Caco-2 (cell line): ENCODE measurements at regions of chr11 and their contacts with region 1.

Region 1: GRCh38 chr11:3849297-3849874 is 6.1 kb upstream of the STIM1 start:
- DNase-seq: peak in 1 of 2 experiments; percentile 70
- H3K4me3 ChIP-seq: no peak overlapping the region
- H3K4me3 Mint-ChIP-seq: no peak overlapping the region
- H3K27ac Mint-ChIP-seq: no peak overlapping the region
- H3K4me1 ChIP-seq: peaks cover 7% of the 10 kb centered on the region
- H3K4me1 Mint-ChIP-seq: peaks cover 19% of the 10 kb centered on the region
- H3K27me3 ChIP-seq: no peaks in the 10 kb centered on the region
- H3K27me3 Mint-ChIP-seq: no peaks in the 10 kb centered on the region
- CTCF ChIP-seq: peak; percentile 67 to 74

Region 2: DNA sequence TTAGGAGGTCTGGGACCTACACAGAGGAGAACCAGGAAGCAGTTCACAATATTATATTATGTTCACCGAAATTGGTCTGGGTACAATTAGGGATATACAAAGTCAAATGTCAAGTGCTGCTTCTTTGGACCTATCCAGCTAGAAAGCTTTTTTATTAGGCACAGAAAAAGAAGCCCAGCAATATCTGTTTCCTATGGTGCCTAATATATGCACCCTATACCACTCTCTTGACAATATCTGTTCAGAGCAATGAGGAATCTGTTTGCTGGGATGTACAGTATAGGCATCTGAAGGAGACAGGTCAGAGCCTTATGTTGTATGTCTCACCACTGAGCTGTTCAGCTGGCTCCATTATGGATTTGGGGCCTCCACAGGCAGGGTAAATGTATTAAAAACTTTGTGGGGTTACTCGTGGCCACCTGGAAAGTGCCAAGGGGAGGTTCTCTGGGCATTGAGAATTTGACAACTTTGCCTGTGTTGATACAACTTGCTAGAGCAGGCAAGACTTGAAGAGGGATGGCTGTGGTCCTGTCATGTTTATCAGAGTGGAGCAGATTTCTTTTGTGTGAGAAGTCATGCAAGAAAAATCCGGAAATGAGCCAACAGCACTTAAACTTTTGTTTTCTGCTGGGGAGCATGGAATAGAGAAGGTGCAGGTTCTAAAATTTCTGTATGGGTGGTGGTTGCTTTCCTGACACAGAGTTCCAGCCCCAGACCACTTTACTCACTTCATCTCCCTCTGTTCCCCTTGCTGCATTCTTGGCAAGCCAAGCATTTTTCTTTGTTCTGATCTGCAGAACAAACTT is 16.2 kb after region 1 on chr11:
- CTCF ChIA-PET with region 1: interaction called, 12 read pairs
- POLR2A ChIA-PET with region 1: no interaction called
- intact Hi-C with region 1: no loop called
- DNase-seq: no peak
- H3K4me3 ChIP-seq: no peak overlapping the region
- H3K4me3 Mint-ChIP-seq: peak overlapping the region; percentile 36
- H3K27ac Mint-ChIP-seq: peak overlapping the region; percentile 85
- H3K4me1 ChIP-seq: peaks cover 42% of the 10 kb centered on the region
- H3K4me1 Mint-ChIP-seq: peaks cover 34% of the 10 kb centered on the region
- H3K27me3 ChIP-seq: no peaks in the 10 kb centered on the region
- H3K27me3 Mint-ChIP-seq: no peaks in the 10 kb centered on the region
- CTCF ChIP-seq: no peak

Region 3: GRCh38 chr11:3959015-3959919 is 109.9 kb after region 1 on chr11:
- CTCF ChIA-PET with region 1: interaction called, 34 read pairs
- POLR2A ChIA-PET with region 1: no interaction called
- intact Hi-C with region 1: loop called (anchors 1 kb)
- DNase-seq: peak in 1 of 2 experiments; percentile 40
- H3K4me3 ChIP-seq: no peak overlapping the region
- H3K4me3 Mint-ChIP-seq: no peak overlapping the region
- H3K27ac Mint-ChIP-seq: peak overlapping the region; percentile 10
- H3K4me1 ChIP-seq: peaks cover 6% of the 10 kb centered on the region; the same call in 1 of the 2 replicates
- H3K4me1 Mint-ChIP-seq: peaks cover 29% of the 10 kb centered on the region
- H3K27me3 ChIP-seq: no peaks in the 10 kb centered on the region
- H3K27me3 Mint-ChIP-seq: no peaks in the 10 kb centered on the region
- CTCF ChIP-seq: peak; percentile 45 to 57

Region 4: GRCh38 chr11:4060182-4060923 is 211.0 kb after region 1 on chr11:
- CTCF ChIA-PET with region 1: interaction called, 10 read pairs
- POLR2A ChIA-PET with region 1: interaction called, 4 read pairs
- intact Hi-C with region 1: no loop called
- DNase-seq: peak; percentile 60 to 76
- H3K4me3 ChIP-seq: no peak overlapping the region
- H3K4me3 Mint-ChIP-seq: no peak overlapping the region
- H3K27ac Mint-ChIP-seq: peak overlapping the region; percentile 6
- H3K4me1 ChIP-seq: peaks cover 40% of the 10 kb centered on the region
- H3K4me1 Mint-ChIP-seq: peaks cover 42% of the 10 kb centered on the region
- H3K27me3 ChIP-seq: no peaks in the 10 kb centered on the region
- H3K27me3 Mint-ChIP-seq: no peaks in the 10 kb centered on the region
- CTCF ChIP-seq: no peak

Region 5: DNA sequence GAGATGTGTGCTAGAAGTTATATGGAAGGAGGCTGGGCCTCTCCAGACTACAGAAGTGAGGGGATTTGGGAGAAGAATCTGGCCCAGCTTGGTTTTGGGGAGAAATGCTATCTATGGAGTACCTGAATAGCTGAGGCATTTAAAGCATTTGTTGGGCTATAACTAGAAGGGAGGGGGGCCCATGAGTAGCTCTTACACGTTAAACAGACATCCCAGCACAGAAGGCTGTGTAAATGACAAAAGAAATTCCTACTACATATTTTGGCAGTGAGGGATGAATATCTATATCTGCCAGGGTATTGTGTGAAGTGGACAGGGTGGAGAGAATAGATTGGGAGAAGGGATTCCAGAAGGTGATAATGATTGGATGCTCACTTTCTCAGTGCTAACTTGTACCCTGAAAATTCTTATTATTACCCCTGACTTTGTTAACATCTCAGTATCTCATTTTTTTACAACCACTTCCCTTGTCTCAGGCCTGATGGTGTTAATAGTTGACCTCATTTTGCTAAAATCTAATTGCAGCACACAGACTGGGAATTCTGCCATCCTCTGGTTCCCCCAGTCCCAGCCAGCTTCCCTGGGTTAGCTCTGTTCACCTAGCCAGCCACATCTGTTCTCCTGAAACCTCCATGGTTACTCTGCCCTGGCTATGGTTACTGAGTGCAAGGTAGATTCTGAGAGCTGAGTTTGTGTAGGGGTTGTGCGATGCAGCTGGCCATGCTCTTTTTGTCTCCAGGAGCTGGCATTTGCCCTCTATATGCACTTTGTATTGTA is 216.4 kb after region 1 on chr11:
- CTCF ChIA-PET with region 1: interaction called, 10 read pairs
- POLR2A ChIA-PET with region 1: interaction called, 4 read pairs
- intact Hi-C with region 1: no loop called
- DNase-seq: no peak
- H3K4me3 ChIP-seq: no peak overlapping the region
- H3K4me3 Mint-ChIP-seq: no peak overlapping the region
- H3K27ac Mint-ChIP-seq: peak overlapping the region; percentile 13
- H3K4me1 ChIP-seq: peaks cover 27% of the 10 kb centered on the region
- H3K4me1 Mint-ChIP-seq: peaks cover 29% of the 10 kb centered on the region
- H3K27me3 ChIP-seq: no peaks in the 10 kb centered on the region
- H3K27me3 Mint-ChIP-seq: no peaks in the 10 kb centered on the region
- CTCF ChIP-seq: no peak